Activated T-helper 2 cell treated with anti-CD3 and anti-CD28 coated beads, Interferon-gamma antibody, Interleukin-2, Interleukin-4, amounts not matched to agents 10 μg/mL and 5 μg/mL and 100 μg/mL, durations not matched to agents 14 hours and 24 hours and 36 hours (primary cell): ENCODE measurements at regions of chr10 and their contacts with region 1.

Region 1: DNA sequence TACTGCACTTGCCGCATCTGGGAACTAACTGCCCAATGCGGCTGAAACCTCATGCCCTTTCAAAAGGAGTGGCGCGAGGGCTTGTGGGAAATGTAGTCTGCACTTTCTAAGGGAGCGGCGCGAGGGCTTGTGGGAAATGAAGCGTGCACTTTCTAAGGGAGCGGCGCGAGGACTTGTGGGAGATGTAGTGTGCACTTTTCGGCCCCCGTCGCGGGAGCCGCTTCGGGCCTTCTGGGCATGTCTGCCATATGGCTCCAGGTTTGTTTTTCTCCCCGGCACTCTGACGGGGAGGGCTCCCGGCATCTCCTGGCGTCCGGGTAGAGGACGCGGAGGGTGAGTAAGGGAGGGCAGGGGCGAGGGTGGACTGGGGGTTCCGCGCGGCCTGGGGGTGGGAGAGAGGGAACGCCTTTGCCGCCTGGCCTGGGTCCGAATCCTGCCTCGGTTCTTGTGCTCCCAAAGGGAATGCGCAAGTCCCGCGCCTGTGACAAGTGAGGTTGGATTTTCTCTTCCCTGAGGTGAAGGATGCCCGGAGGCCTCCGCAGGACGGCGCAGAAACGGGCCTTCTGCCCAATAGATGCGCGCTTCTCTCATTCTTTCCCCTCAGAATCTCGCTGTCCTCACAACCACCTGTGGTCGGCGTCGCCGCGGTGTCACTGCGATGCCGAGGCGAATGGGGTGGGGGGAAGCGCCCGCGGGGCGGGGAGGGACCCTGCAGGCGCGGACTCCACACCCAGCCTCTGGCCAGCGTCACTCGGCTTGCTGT is at the start of gene ZNF37A:
- DNase-seq: peak; percentile 86
- H3K4me3 Mint-ChIP-seq: peak within 1 kb of the TSS; percentile 91
- H3K27ac Mint-ChIP-seq: peak within 1 kb of the TSS; percentile 93
- H3K4me1 Mint-ChIP-seq: peaks cover 22% of the 10 kb centered on the region
- H3K27me3 Mint-ChIP-seq: no peaks in the 10 kb centered on the region
- total RNA-seq, gene ZNF37A: 29.7 and 31.9 TPM in 2 replicates

Region 2: DNA sequence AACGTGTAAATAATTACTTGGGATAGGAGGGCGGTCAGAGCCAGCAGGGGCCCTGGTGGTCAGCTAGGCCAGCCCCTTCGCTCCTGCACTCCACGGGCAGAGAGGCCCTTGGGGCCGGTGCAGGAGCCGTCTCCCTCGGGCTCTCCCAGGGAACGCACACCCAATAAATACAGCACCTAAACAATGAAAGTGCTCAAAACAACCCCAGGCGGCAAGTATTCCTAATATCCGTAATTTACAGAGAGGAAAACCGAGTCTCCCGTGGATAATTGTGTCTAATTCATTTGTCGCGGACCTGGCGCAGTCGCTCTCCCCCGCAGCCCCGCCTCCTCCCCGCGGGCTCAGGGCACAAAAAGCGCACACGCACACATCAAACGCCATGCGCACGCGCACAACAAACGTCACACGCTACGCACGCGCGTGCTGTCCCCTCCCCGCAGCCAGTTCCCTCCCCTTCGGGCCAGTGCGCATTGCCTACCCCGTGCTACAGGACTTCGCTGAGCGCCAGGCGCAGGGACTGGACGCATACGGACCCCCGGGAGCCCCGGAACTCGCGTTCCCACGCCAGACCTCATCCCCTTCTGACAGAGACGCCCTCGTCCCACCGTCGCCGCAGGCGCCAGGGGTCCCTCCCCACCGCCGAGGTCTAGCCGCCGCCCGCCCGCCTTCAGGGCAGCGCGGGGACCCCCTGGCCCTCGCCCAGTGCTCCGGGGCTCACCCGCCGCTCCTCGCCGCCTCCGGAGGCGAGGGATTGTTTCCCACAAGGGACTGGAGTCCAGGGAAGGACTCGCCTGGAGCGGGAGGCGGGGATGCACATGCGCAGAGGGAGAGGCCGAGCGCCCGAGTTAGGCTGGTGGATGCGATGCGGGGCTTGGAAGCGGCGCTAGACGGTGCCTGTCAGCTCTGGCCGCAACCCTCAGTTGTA is 236.8 kb before region 1 on chr10 and contains the start of gene ZNF248:
- intact Hi-C with region 1: loop called (anchors 1 kb)
- DNase-seq: peak; percentile 93
- H3K4me3 Mint-ChIP-seq: peak within 1 kb of the TSS; percentile 92
- H3K27ac Mint-ChIP-seq: peak within 1 kb of the TSS; percentile 94
- H3K4me1 Mint-ChIP-seq: peaks cover 25% of the 10 kb centered on the region
- H3K27me3 Mint-ChIP-seq: no peaks in the 10 kb centered on the region
- total RNA-seq, gene ZNF248: 9.2 and 11.2 TPM in 2 replicates

Region 3: GRCh38 chr10:37976091-37976879 is 118.1 kb before region 1 on chr10 and contains the start of gene ZNF25:
- intact Hi-C with region 1: loop called (anchors 1 kb)
- DNase-seq: peak; percentile 96
- H3K4me3 Mint-ChIP-seq: peak within 1 kb of the TSS; percentile 91
- H3K27ac Mint-ChIP-seq: peak within 1 kb of the TSS; percentile 97
- H3K4me1 Mint-ChIP-seq: peaks cover 19% of the 10 kb centered on the region
- H3K27me3 Mint-ChIP-seq: no peaks in the 10 kb centered on the region
- total RNA-seq, gene ZNF25: 7.2 and 9.0 TPM in 2 replicates

Region 4: GRCh38 chr10:38016354-38016753 is 78.0 kb before region 1 on chr10:
- intact Hi-C with region 1: no loop called
- DNase-seq: no peak
- H3K4me3 Mint-ChIP-seq: no peak overlapping the region
- H3K27ac Mint-ChIP-seq: no peak overlapping the region
- H3K4me1 Mint-ChIP-seq: peaks cover 12% of the 10 kb centered on the region
- H3K27me3 Mint-ChIP-seq: no peaks in the 10 kb centered on the region

Region 5: DNA sequence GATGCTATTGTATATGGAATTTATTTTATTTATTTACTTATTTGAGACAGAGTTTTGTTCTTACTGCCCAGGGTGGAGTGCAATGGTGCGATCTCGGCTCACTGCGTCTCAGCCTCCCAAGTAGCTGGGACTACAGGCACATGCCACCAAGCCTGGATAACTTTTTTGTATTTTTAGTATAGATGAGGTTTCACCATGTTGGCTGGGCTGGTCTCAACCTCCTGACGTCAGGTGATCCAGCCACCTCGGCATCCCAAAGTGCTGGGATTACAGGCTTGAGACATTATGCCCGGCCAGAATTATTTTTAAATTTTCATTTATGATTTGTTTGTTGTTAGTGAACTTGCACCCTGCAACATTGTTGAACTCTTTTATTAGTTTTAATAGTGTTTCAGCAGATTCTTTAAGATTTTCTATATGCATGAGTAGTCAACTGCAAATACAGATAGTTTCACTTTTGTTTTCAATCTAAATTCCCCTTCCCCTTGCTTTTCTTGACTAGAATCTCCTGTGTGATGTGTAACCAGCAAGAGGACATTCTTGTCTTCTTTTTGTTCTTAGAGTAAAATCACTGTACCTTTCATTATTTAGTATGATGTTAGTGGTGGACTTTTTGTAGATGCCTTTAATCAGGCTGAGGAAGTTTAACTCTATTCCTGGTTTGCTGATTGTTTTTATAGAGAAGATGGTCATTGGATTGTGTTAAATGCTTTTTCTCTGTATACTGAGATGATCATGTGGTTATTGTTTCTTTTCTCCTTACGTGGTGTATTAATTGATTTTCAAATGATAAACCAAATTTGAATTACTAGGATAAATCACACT is 56.0 kb before region 1 on chr10:
- intact Hi-C with region 1: loop called (anchors 2 kb)
- DNase-seq: no peak
- H3K4me3 Mint-ChIP-seq: peak overlapping the region; percentile 70
- H3K27ac Mint-ChIP-seq: peak overlapping the region; percentile 89
- H3K4me1 Mint-ChIP-seq: peaks cover 22% of the 10 kb centered on the region
- H3K27me3 Mint-ChIP-seq: no peaks in the 10 kb centered on the region

Region 6: GRCh38 chr10:38047666-38048065 is 46.7 kb before region 1 on chr10:
- intact Hi-C with region 1: loop called (anchors 2 kb)
- DNase-seq: no peak
- H3K4me3 Mint-ChIP-seq: no peak overlapping the region
- H3K27ac Mint-ChIP-seq: no peak overlapping the region
- H3K4me1 Mint-ChIP-seq: peaks cover 19% of the 10 kb centered on the region
- H3K27me3 Mint-ChIP-seq: no peaks in the 10 kb centered on the region